Naive thymus-derived CD8-positive, alpha-beta T cell (primary cell): ENCODE measurements at regions of chr15 and their contacts with region 1.

Region 1: GRCh38 chr15:60840306-60840702 is 361.4 kb upstream of the ICE2 start:
- DNase-seq: no peak
- ATAC-seq: no peak
- H3K4me3 Mint-ChIP-seq: peak overlapping the region; percentile 75 to 91 (median 87)
- H3K27ac Mint-ChIP-seq: peak overlapping the region; percentile 91 to 96 (median 94)
- H3K4me1 Mint-ChIP-seq: peaks cover 42 to 92% (median 83%) of the 10 kb centered on the region in 4 donors
- H3K27me3 Mint-ChIP-seq: no peaks in the 10 kb centered on the region

Region 2: DNA sequence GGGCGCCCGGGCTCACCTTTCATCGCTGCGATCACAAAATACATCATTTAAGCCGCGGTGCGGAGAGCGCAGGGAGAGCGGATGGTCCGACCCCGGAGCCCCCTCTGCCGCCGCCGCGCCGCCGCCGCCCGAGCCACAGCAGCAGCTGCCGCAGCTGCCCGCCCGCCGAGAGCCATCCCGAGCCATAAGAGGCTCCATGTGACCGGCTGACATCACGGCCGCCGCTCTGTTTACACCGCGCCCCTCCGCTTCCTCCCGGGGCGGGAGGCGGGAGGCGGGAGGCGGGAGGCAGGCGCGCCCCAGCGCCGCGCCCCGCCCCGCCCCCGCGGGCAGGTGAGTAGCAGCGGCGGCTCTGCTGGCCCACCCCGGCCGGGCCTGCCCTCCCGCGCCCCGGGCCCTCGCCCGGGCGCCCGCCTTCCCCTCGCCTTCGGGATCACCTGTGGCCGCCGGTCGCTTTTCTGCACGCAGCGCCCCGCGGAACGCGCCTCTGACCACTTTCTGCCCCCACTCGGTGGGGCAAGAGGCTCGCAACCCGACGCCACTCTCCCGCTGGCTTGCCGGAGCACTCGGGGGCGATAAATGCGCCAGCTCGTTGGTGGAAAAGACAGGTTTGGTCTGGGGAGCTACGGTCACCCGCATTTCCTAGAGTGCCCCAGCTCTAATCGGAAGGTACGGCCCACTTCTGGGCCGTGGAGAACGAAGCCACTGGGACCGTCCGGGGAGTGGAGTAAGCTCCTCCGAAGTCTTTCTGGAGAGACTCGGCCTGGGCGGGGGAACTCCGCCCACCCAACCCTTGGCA is 247.7 kb before region 1 on chr15:
- POLR2A ChIA-PET with region 1: interaction called, 12 read pairs
- DNase-seq: peak; percentile 78 to 92 (median 86)
- ATAC-seq: peak; percentile 83 to 88
- H3K4me3 Mint-ChIP-seq: peak overlapping the region; percentile 79 to 91 (median 86)
- H3K27ac Mint-ChIP-seq: peak overlapping the region; percentile 84 to 95 (median 89)
- H3K4me1 Mint-ChIP-seq: peaks cover 20 to 43% (median 40%) of the 10 kb centered on the region in 4 donors
- H3K27me3 Mint-ChIP-seq: peaks cover 0 to 11% (median 0%) of the 10 kb centered on the region in 5 donors

Region 3: GRCh38 chr15:60809375-60809774 is 30.9 kb before region 1 on chr15:
- POLR2A ChIA-PET with region 1: interaction called, 15 read pairs
- DNase-seq: peak in 3 of 10 donors; percentile 17 to 55 (median 46)
- ATAC-seq: peak; percentile 49 to 85
- H3K4me3 Mint-ChIP-seq: peak overlapping the region; percentile 32 to 62 (median 53)
- H3K27ac Mint-ChIP-seq: peak overlapping the region; percentile 57 to 94 (median 82)
- H3K4me1 Mint-ChIP-seq: peaks cover 41 to 71% (median 60%) of the 10 kb centered on the region in 4 donors
- H3K27me3 Mint-ChIP-seq: no peaks in the 10 kb centered on the region